ENCODE measurements at regions of chr18 and their contacts with region 1.

Region 1: GRCh38 chr18:5057386-5058348 is 139.4 kb downstream of the AKAIN1 start:
- DNase-seq: peak; percentile 52
- H3K4me3 Mint-ChIP-seq: no peak overlapping the region
- H3K27ac Mint-ChIP-seq: no peak overlapping the region
- H3K4me1 Mint-ChIP-seq: peaks cover 17% of the 10 kb centered on the region
- H3K27me3 Mint-ChIP-seq: peaks cover 3% of the 10 kb centered on the region

Region 2: GRCh38 chr18:4106407-4107033 is 951.1 kb before region 1 on chr18:
- CTCF ChIA-PET with region 1: interaction called, 42 read pairs
- POLR2A ChIA-PET with region 1: no interaction called
- DNase-seq: peak; percentile 61
- H3K4me3 Mint-ChIP-seq: no peak overlapping the region
- H3K27ac Mint-ChIP-seq: no peak overlapping the region
- H3K4me1 Mint-ChIP-seq: no peaks in the 10 kb centered on the region
- H3K27me3 Mint-ChIP-seq: peaks cover 3% of the 10 kb centered on the region

Region 3: GRCh38 chr18:5103286-5103685 is 45.6 kb after region 1 on chr18:
- CTCF ChIA-PET with region 1: no interaction called
- POLR2A ChIA-PET with region 1: no interaction called
- DNase-seq: no peak
- H3K4me3 Mint-ChIP-seq: no peak overlapping the region
- H3K27ac Mint-ChIP-seq: no peak overlapping the region
- H3K4me1 Mint-ChIP-seq: no peaks in the 10 kb centered on the region
- H3K27me3 Mint-ChIP-seq: no peaks in the 10 kb centered on the region

Measured in activated CD4-positive, alpha-beta memory T cell treated with anti-CD3 and anti-CD28 coated beads, Interleukin-2, amount 10 ng/mL, durations not matched to agents 7 days and 5 days (primary cell).